ENCODE measurements at regions of chr11 and their contacts with region 1.

Region 1: GRCh38 chr11:118224511-118225188 is at the start of gene JAML:
- DNase-seq: peak; percentile 67
- H3K4me3 Mint-ChIP-seq: peak within 1 kb of the TSS; percentile 88
- H3K27ac Mint-ChIP-seq: peak within 1 kb of the TSS; percentile 98
- H3K4me1 Mint-ChIP-seq: peaks cover 58% of the 10 kb centered on the region
- H3K27me3 Mint-ChIP-seq: no peaks in the 10 kb centered on the region
- total RNA-seq, gene JAML: 264 and 271 TPM in 2 replicates

Region 2: DNA sequence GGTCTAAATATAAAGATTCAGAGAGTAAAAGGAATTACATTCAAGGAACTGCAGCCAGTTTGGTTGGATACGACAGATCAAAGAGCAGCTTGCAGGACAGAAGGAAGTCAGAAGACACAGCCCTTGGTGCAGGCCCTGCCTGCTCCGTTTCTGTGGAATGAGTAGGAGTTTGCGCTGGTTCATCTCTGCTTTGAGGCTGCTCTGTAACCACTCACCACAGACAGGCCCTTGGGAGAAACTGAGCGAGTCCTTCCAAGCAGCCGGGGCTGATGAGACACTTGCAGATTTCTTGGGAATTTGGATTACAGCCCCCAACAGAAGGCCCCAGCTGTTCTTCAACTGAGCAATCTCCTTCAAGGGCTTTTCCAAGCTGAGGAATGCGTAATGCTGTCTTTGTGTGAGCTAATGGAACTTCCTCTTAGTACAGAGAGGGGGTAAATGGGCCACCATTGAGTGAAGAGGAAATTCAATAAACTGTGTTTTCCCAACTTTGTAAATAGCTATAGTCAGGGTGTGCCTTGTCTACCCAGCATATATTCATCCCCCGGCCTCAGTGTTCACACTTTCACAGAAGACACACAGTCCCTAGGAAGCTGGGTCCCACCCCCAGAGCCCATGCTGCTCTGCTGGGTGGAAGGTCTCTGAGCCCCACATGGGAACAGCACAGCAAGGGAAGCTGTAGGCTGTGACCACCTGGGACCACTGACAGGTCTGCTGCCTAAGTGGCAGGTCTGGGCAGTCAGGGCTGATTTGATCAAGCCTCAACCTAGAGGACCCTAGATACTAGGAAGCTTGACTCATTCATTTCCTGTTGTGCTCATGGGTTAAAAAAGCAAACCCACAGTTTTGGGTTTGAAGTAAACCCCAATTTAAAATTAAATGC is 221.9 kb before region 1 on chr11:
- intact Hi-C with region 1: loop called (anchors 2 kb)
- DNase-seq: peak; percentile 50
- H3K4me3 Mint-ChIP-seq: peak overlapping the region; percentile 61
- H3K27ac Mint-ChIP-seq: peak overlapping the region; percentile 98
- H3K4me1 Mint-ChIP-seq: peaks cover 92% of the 10 kb centered on the region
- H3K27me3 Mint-ChIP-seq: no peaks in the 10 kb centered on the region

Region 3: GRCh38 chr11:118068206-118068944 is 156.3 kb before region 1 on chr11:
- intact Hi-C with region 1: no loop called
- DNase-seq: no peak
- H3K4me3 Mint-ChIP-seq: no peak overlapping the region
- H3K27ac Mint-ChIP-seq: no peak overlapping the region
- H3K4me1 Mint-ChIP-seq: peaks cover 15% of the 10 kb centered on the region
- H3K27me3 Mint-ChIP-seq: peaks cover 12% of the 10 kb centered on the region

Region 4: GRCh38 chr11:118247047-118247446 is 22.4 kb after region 1 on chr11:
- intact Hi-C with region 1: loop called (anchors 1 kb)
- DNase-seq: no peak
- H3K4me3 Mint-ChIP-seq: peak overlapping the region; percentile 40
- H3K27ac Mint-ChIP-seq: peak overlapping the region; percentile 96
- H3K4me1 Mint-ChIP-seq: peaks cover 81% of the 10 kb centered on the region
- H3K27me3 Mint-ChIP-seq: no peaks in the 10 kb centered on the region

Region 5: DNA sequence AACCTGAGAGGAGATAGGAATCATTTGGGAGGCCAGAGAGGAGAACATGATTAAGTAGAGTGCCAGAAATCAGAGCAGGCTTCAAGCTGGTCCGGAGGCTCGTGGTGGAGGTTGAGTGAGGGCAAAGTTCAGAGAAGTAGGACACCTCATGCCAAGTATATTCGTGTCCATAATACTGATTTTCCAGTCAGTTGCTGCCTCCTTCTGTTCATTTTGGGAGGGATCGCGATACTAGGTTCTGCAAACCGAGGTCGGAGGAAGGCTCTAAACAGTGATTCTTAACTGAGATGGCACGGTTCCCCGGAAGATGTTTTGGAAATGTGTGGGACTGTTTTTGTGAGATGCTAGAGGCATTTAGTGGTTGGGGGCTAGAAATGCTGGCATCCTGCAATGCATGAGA is 66.3 kb after region 1 on chr11:
- intact Hi-C with region 1: loop called (anchors 2 kb)
- DNase-seq: peak; percentile 40
- H3K4me3 Mint-ChIP-seq: no peak overlapping the region
- H3K27ac Mint-ChIP-seq: peak overlapping the region; percentile 15
- H3K4me1 Mint-ChIP-seq: peaks cover 29% of the 10 kb centered on the region
- H3K27me3 Mint-ChIP-seq: peaks cover 2% of the 10 kb centered on the region

Region 6: DNA sequence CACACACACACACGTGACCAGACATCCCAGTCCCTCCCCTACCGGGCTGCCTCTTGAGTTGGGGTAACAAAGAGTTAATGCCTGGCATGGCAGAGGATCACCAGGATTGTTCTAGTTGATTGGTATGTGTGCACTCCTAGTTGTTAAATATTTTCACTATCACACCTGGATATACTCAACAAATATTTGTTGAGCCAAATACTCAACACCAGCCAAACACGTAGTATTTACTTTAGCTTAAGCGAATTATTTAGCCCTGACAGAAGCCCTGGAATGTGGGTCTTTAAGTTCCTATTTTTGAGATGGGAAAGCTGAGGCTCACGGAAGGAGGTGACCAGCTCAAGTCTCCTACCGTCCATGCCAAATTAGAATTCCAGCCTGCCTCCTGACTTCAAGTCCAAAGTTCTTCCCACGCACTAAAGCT is 90.3 kb after region 1 on chr11:
- intact Hi-C with region 1: no loop called
- DNase-seq: no peak
- H3K4me3 Mint-ChIP-seq: no peak overlapping the region
- H3K27ac Mint-ChIP-seq: peak overlapping the region; percentile 86
- H3K4me1 Mint-ChIP-seq: peaks cover 81% of the 10 kb centered on the region
- H3K27me3 Mint-ChIP-seq: no peaks in the 10 kb centered on the region

Region 7: GRCh38 chr11:118552341-118552740 is 327.7 kb after region 1 on chr11:
- intact Hi-C with region 1: no loop called
- DNase-seq: no peak
- H3K4me3 Mint-ChIP-seq: no peak overlapping the region
- H3K27ac Mint-ChIP-seq: no peak overlapping the region
- H3K4me1 Mint-ChIP-seq: no peaks in the 10 kb centered on the region
- H3K27me3 Mint-ChIP-seq: no peaks in the 10 kb centered on the region

Region 8: DNA sequence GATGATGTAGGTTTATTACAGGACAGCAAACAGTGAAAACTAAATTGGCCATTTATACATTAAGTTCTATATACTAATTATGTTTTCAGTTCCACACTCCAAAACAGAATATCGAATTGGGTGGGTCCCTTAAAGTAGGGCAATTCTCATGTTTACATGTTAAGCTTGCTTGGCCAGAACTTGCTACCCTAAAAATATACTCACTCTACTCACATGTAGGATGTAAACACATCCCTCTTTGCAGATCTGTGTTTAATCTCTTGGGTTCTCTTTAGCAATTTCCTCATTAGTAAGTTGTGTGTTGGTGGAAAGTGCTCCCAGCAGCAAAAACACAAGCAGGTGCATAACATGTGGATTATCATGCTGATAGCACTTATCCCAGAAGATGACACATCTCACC is 588.9 kb after region 1 on chr11:
- intact Hi-C with region 1: no loop called
- DNase-seq: no peak
- H3K4me3 Mint-ChIP-seq: no peak overlapping the region
- H3K27ac Mint-ChIP-seq: no peak overlapping the region
- H3K4me1 Mint-ChIP-seq: no peaks in the 10 kb centered on the region
- H3K27me3 Mint-ChIP-seq: peaks cover 3% of the 10 kb centered on the region